HCT116 (cell line): ENCODE measurements at regions of chr12 and their contacts with region 1.

Region 1: GRCh38 chr12:77010691-77011548 is 54.4 kb downstream of the E2F7 start:
- DNase-seq: peak; percentile 66
- ATAC-seq: peak; percentile 93
- H3K4me3 ChIP-seq: no peak overlapping the region
- H3K27ac ChIP-seq: no peak overlapping the region
- H3K4me1 ChIP-seq: peaks cover 0 to 4% of the 10 kb centered on the region in 2 experiments; a peak in 1 of 4 replicates
- H3K27me3 ChIP-seq: no peaks in the 10 kb centered on the region
- CTCF ChIP-seq: peak; percentile 68 to 99 (median 96); a peak in 5 of 6 replicates
- POLR2A ChIP-seq: no peak
- RAD21 ChIP-seq: peak; percentile 88

Region 2: GRCh38 chr12:76621582-76622024 is 389.3 kb before region 1 on chr12:
- CTCF ChIA-PET with region 1: interaction called, 50 read pairs
- POLR2A ChIA-PET with region 1: no interaction called
- RAD21 ChIA-PET with region 1: interaction called, 5 to 6 read pairs
- intact Hi-C with region 1: loop called (anchors 1 kb)
- DNase-seq: peak; percentile 44
- ATAC-seq: peak; percentile 88
- H3K4me3 ChIP-seq: no peak overlapping the region
- H3K27ac ChIP-seq: no peak overlapping the region
- H3K4me1 ChIP-seq: peaks cover 2 to 8% of the 10 kb centered on the region in 2 experiments; a peak in 2 of 4 replicates
- H3K27me3 ChIP-seq: no peaks in the 10 kb centered on the region
- CTCF ChIP-seq: peak; percentile 84 to 92 (median 90); a peak in 5 of 6 replicates
- POLR2A ChIP-seq: no peak
- RAD21 ChIP-seq: peak; percentile 97

Region 3: GRCh38 chr12:76790564-76791552 is 220.1 kb before region 1 on chr12:
- CTCF ChIA-PET with region 1: interaction called, 12 read pairs
- POLR2A ChIA-PET with region 1: no interaction called
- RAD21 ChIA-PET with region 1: no interaction called
- intact Hi-C with region 1: no loop called
- DNase-seq: peak; percentile 6
- ATAC-seq: peak; percentile 42; the same call in 1 of the 2 replicates
- H3K4me3 ChIP-seq: no peak overlapping the region
- H3K27ac ChIP-seq: no peak overlapping the region
- H3K4me1 ChIP-seq: no peaks in the 10 kb centered on the region
- H3K27me3 ChIP-seq: no peaks in the 10 kb centered on the region
- CTCF ChIP-seq: peak; percentile 41 to 68 (median 62); a peak in 4 of 6 replicates
- POLR2A ChIP-seq: no peak
- RAD21 ChIP-seq: peak; percentile 83

Region 4: GRCh38 chr12:76820888-76821482 is 189.9 kb before region 1 on chr12:
- CTCF ChIA-PET with region 1: interaction called, 10 read pairs
- POLR2A ChIA-PET with region 1: no interaction called
- RAD21 ChIA-PET with region 1: no interaction called
- intact Hi-C with region 1: no loop called
- DNase-seq: peak; percentile 7
- ATAC-seq: peak; percentile 84
- H3K4me3 ChIP-seq: no peak overlapping the region
- H3K27ac ChIP-seq: no peak overlapping the region
- H3K4me1 ChIP-seq: no peaks in the 10 kb centered on the region
- H3K27me3 ChIP-seq: no peaks in the 10 kb centered on the region
- CTCF ChIP-seq: peak; percentile 41 to 84 (median 74); a peak in 5 of 6 replicates
- POLR2A ChIP-seq: no peak
- RAD21 ChIP-seq: peak; percentile 60

Region 5: DNA sequence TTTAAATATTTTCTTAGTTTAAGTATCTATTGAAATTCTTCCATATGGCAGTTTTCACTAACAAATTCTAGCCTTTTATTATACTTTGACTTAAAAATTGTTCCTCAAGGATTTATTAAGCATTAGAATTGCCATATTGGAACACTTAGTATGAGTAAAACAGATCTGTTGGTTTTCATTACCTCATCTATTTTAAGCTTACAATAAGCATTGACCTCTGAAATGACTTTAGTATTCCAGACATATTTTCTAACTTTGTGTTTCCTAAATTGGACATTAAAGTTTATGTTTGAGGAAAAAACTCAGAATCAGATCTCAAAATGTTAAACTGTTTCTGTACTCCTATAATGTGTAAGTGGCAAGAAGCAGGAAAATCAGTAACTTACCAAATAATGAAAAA is 180.5 kb before region 1 on chr12:
- CTCF ChIA-PET with region 1: interaction called, 6 read pairs
- POLR2A ChIA-PET with region 1: no interaction called
- RAD21 ChIA-PET with region 1: no interaction called
- intact Hi-C with region 1: loop called (anchors 10 kb)
- DNase-seq: no peak
- ATAC-seq: no peak
- H3K4me3 ChIP-seq: no peak overlapping the region
- H3K27ac ChIP-seq: no peak overlapping the region
- H3K4me1 ChIP-seq: no peaks in the 10 kb centered on the region
- H3K27me3 ChIP-seq: no peaks in the 10 kb centered on the region
- CTCF ChIP-seq: no peak
- POLR2A ChIP-seq: no peak
- RAD21 ChIP-seq: no peak

Region 6: GRCh38 chr12:76919383-76920171 is 91.3 kb before region 1 on chr12:
- CTCF ChIA-PET with region 1: no interaction called
- POLR2A ChIA-PET with region 1: no interaction called
- RAD21 ChIA-PET with region 1: no interaction called
- intact Hi-C with region 1: no loop called
- DNase-seq: no peak
- ATAC-seq: no peak
- H3K4me3 ChIP-seq: no peak overlapping the region
- H3K27ac ChIP-seq: no peak overlapping the region
- H3K4me1 ChIP-seq: no peaks in the 10 kb centered on the region
- H3K27me3 ChIP-seq: no peaks in the 10 kb centered on the region
- CTCF ChIP-seq: no peak
- POLR2A ChIP-seq: no peak
- RAD21 ChIP-seq: no peak

Region 7: GRCh38 chr12:76952995-76953394 is 57.9 kb before region 1 on chr12:
- CTCF ChIA-PET with region 1: interaction called, 13 read pairs
- POLR2A ChIA-PET with region 1: no interaction called
- RAD21 ChIA-PET with region 1: interaction called in 1 of 2 experiments, 4 read pairs
- intact Hi-C with region 1: loop called (anchors 1 kb)
- DNase-seq: peak; percentile 27
- ATAC-seq: peak; percentile 75
- H3K4me3 ChIP-seq: no peak overlapping the region
- H3K27ac ChIP-seq: no peak overlapping the region
- H3K4me1 ChIP-seq: peaks cover 0 to 8% of the 10 kb centered on the region in 2 experiments; a peak in 1 of 4 replicates
- H3K27me3 ChIP-seq: no peaks in the 10 kb centered on the region
- CTCF ChIP-seq: peak; percentile 13 to 58 (median 41); a peak in 3 of 6 replicates
- POLR2A ChIP-seq: no peak
- RAD21 ChIP-seq: peak; percentile 74

Region 8: DNA sequence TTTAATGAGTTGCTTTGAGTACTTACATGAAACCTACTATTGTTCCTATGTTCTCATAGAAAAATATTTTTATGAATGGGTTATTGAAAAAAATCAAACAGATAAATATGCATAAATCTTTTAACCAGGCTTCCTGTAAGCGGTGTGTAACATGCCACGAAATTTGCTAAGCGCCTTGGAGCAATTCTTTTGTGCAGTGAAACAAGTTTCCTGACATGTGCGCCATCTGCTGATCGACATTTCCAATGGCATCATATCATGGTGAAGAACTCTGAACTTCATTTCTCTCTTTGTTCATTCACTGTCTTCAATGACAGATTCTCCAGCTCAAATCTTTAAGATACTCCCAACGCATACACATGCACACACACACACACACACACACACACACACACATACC is 674.2 kb after region 1 on chr12:
- CTCF ChIA-PET with region 1: interaction called, 19 read pairs
- POLR2A ChIA-PET with region 1: no interaction called
- RAD21 ChIA-PET with region 1: interaction called in 1 of 2 experiments, 3 read pairs
- intact Hi-C with region 1: no loop called
- DNase-seq: peak; percentile 71
- ATAC-seq: peak; percentile 94
- H3K4me3 ChIP-seq: no peak overlapping the region
- H3K27ac ChIP-seq: no peak overlapping the region
- H3K4me1 ChIP-seq: peaks cover 0 to 3% of the 10 kb centered on the region in 2 experiments; a peak in 1 of 4 replicates
- H3K27me3 ChIP-seq: no peaks in the 10 kb centered on the region
- CTCF ChIP-seq: peak; percentile 62 to 76 (median 70); a peak in 5 of 6 replicates
- POLR2A ChIP-seq: no peak
- RAD21 ChIP-seq: peak; percentile 79